T-cell (primary cell): ENCODE measurements at regions of chr6 and their contacts with region 1.

Region 1: DNA sequence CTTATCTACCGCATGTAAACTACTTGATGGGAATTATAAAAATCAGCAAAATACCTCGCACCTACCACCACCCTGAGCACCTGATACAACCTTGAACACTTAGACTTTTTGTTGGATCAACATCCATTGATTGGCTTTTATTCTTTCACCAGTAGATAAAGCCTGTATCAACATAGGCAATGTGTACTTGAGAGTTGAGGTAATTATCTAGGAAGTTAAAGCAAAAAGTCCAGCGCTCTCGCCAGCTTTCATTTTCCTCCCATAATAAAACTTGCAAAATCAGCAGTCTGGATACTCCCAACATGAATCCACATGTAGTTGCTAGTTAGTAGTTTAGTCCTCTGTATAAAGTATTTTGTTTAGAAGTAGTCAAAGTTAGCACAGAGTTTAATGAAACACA is 132.0 kb upstream of the PRDM1 start:
- DNase-seq: no peak
- ATAC-seq: no peak
- H3K4me3 ChIP-seq: no peak overlapping the region
- H3K4me3 Mint-ChIP-seq: no peak overlapping the region
- H3K27ac ChIP-seq: no peak overlapping the region
- H3K27ac Mint-ChIP-seq: no peak overlapping the region
- H3K4me1 ChIP-seq: no peaks in the 10 kb centered on the region
- H3K4me1 Mint-ChIP-seq: no peaks in the 10 kb centered on the region
- H3K27me3 ChIP-seq: no peaks in the 10 kb centered on the region
- H3K27me3 Mint-ChIP-seq: no peaks in the 10 kb centered on the region

Region 2: DNA sequence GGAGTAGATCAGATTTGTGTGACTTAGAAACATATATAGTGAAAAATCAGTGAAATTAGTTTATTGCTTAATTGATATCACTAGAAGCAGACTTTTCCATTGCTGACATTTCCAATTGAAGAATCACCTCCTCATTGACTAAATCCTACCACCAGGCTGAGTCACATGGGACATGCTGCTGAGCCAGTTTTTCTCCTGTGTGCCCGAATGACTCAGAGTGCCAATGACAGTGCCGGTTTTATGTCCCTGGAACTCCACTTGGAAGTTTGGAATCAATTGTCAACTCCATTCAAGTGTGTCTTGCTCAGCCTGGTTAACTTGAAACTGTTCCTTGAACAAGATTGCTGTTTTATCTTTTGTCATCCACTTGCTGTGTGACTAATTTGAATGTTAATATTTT is 184.2 kb before region 1 on chr6:
- CTCF ChIA-PET with region 1: no interaction called
- POLR2A ChIA-PET with region 1: no interaction called
- DNase-seq: no peak
- ATAC-seq: no peak
- H3K4me3 ChIP-seq: no peak overlapping the region
- H3K4me3 Mint-ChIP-seq: no peak overlapping the region
- H3K27ac ChIP-seq: no peak overlapping the region
- H3K27ac Mint-ChIP-seq: no peak overlapping the region
- H3K4me1 ChIP-seq: no peaks in the 10 kb centered on the region
- H3K4me1 Mint-ChIP-seq: no peaks in the 10 kb centered on the region
- H3K27me3 ChIP-seq: no peaks in the 10 kb centered on the region
- H3K27me3 Mint-ChIP-seq: no peaks in the 10 kb centered on the region

Region 3: DNA sequence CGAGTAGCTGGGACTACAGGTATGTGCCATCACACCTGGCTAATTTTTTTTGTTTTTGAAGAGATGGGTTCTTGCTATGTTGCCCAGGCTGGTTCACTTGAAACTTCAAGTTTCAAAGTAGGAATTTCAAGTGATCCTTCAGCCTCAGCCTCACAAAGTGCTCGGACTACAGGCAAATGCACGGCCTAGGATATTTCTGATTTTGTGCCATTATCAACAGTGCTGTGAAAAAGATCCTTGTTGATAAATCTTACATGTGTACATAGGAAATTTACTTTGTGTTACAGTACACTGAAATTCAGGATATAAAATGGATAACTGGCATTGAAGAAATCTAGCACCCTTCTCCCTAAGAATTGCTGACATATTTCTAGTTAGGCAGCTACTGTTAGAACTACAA is 52.6 kb before region 1 on chr6:
- CTCF ChIA-PET with region 1: interaction called in 1 of 2 experiments, 4 read pairs
- POLR2A ChIA-PET with region 1: interaction called in 1 of 2 experiments, 10 read pairs
- DNase-seq: no peak
- ATAC-seq: no peak
- H3K4me3 ChIP-seq: no peak overlapping the region
- H3K4me3 Mint-ChIP-seq: no peak overlapping the region
- H3K27ac ChIP-seq: no peak overlapping the region
- H3K27ac Mint-ChIP-seq: no peak overlapping the region
- H3K4me1 ChIP-seq: peaks cover 0 to 5% of the 10 kb centered on the region in 2 experiments
- H3K4me1 Mint-ChIP-seq: peaks cover 11 to 12% (median 11%) of the 10 kb centered on the region in 3 donors
- H3K27me3 ChIP-seq: no peaks in the 10 kb centered on the region
- H3K27me3 Mint-ChIP-seq: peaks cover 0 to 8% of the 10 kb centered on the region in 2 donors